Activated naive CD8-positive, alpha-beta T cell treated with anti-CD3 and anti-CD28 coated beads, Interleukin-2, amount 10 ng/mL, durations not matched to agents 7 days and 5 days (primary cell): ENCODE measurements at regions of chr9 and their contacts with region 1.

Region 1: GRCh38 chr9:99012942-99013512 is 69.3 kb downstream of the COL15A1 start:
- DNase-seq: peak; percentile 50
- ATAC-seq: peak; percentile 56
- H3K4me3 Mint-ChIP-seq: peak overlapping the region; percentile 71
- H3K27ac Mint-ChIP-seq: peak overlapping the region; percentile 96
- H3K4me1 Mint-ChIP-seq: peaks cover 27% of the 10 kb centered on the region
- H3K27me3 Mint-ChIP-seq: peaks cover 2% of the 10 kb centered on the region

Region 2: GRCh38 chr9:99023831-99024230 is 10.8 kb after region 1 on chr9:
- POLR2A ChIA-PET with region 1: interaction called, 14 read pairs
- DNase-seq: no peak
- ATAC-seq: no peak
- H3K4me3 Mint-ChIP-seq: no peak overlapping the region
- H3K27ac Mint-ChIP-seq: no peak overlapping the region
- H3K4me1 Mint-ChIP-seq: peaks cover 21% of the 10 kb centered on the region
- H3K27me3 Mint-ChIP-seq: no peaks in the 10 kb centered on the region

Region 3: GRCh38 chr9:99092643-99093491 is 79.8 kb after region 1 on chr9:
- POLR2A ChIA-PET with region 1: interaction called, 32 read pairs
- DNase-seq: peak; percentile 65
- ATAC-seq: peak; percentile 83
- H3K4me3 Mint-ChIP-seq: peak overlapping the region; percentile 74
- H3K27ac Mint-ChIP-seq: peak overlapping the region; percentile 93
- H3K4me1 Mint-ChIP-seq: peaks cover 63% of the 10 kb centered on the region
- H3K27me3 Mint-ChIP-seq: no peaks in the 10 kb centered on the region